AG04449 (cell line): ENCODE measurements at regions of chr15 and their contacts with region 1.

Region 1: DNA sequence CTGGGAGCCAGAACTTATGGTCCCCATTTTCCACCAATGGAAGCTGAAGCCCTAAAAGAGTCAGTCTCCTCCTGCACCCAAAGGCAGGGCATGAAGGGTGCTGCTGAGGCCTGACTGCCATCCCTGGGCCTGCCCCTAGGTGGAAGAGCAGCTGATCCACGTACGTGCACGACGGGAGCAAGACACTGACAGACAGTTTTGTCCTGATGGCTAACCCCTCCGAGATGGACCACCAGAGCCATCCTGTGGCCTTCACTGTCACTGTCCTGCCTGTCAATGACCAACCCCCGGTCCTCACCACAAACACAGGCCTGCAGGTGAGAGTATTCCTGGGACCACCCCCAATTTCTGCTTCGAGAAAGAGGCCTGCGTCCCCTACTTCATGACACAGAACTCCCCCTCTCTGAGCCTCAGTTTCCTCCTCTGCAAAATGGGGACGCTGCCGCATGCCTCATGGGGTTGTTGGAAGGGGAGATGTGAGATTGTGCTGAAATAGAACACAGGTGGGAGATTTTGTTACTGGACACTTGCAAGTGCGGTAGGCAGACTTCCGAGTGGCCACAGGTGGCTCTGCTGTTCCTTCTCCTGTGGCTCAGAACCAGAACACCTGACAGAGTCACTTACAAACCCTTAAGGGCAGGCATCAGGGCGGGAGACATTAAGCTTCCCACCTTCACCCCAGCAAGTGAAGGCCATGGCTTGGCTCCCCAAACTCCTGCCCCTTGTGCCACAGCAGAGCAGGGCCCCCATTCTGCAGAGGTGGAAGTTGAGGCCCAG is 175.3 kb downstream of the TBC1D2B start:
- DNase-seq: no peak
- H3K4me3 ChIP-seq: no peak overlapping the region
- CTCF ChIP-seq: peak; percentile 21

Region 2: DNA sequence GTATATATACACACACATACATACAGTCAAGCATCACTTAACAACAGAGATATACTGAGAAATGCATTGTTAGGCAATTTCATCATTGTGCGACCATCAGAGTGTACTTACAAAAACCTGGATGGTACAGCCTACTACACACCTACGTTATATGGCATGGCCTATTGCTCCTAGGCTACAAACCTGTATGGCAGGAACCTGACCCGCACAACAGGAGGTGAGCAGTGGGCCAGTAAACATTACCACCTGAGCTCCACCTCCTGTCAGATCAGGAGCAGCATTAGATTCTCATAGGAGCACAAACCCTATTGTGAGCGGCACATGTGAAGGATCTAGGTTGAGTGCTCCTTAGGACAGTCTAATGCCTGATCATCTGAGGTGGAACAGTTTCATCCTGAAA is 1086.8 kb before region 1 on chr15:
- CTCF ChIA-PET with region 1: no interaction called
- POLR2A ChIA-PET with region 1: no interaction called
- DNase-seq: no peak
- H3K4me3 ChIP-seq: no peak overlapping the region
- CTCF ChIP-seq: no peak

Region 3: DNA sequence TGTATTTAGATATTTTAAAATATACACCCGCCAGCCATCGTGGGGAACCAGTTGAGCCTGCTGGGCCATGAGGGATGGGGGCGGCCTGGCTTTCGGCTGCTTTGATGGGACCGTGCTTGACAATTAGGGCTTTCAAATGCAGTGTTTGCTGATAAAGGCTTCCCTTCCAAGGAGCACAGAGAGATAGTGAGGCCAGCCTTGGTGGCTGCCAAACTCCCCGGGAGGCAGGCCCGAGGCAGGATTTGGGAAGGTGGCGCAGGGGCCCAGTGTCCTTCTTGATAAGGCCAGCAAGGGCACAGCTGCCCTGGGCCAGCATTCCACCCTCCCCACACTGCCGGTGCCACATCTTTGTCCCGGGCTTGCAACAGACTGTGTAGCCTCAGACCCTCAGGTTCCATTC is 345.0 kb before region 1 on chr15:
- CTCF ChIA-PET with region 1: no interaction called
- POLR2A ChIA-PET with region 1: no interaction called
- DNase-seq: no peak
- H3K4me3 ChIP-seq: no peak overlapping the region
- CTCF ChIP-seq: no peak

Region 4: DNA sequence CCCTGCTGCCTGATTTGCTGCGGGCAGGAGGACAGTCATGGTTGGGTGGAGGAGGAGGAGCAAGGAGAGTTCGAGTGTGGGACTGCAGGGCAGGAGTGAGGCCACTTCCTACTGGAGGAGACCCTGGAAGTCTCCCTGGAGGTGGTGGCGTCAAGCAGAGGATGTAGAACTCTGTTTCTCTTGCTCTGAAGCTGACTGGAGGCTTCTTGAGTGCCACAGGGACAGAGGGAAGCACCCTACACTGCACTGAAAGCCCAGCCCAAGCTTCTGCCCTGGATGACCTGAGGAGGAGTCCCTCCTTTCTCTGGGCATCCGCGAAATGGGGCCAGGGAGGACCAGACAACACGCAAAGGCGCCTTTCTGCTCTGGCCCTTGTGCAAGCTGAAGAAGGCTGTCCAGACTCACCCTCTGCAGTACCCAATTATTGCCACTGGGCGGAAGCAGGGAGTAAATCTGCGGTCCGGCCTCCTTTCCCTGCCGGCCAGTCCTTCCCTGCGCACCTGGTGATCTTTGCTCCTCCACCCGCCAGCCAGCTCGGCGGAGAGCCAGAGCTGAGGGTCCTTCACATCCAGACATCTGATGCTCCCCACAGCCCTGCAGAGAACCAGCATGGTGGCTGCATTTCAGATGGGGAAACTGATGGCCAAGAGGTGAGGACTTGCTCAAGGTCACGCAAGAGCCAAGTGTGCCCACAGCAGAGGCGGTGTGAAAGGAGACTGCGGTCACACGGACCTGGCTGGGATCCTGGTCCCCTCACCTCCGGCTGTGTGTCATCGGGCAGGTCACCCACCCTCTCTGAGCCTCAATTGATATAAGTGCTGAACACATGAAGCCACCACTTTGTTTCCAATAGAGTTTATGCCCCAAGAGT is 31.7 kb before region 1 on chr15:
- CTCF ChIA-PET with region 1: interaction called, 10 read pairs
- POLR2A ChIA-PET with region 1: no interaction called
- DNase-seq: no peak
- H3K4me3 ChIP-seq: no peak overlapping the region
- CTCF ChIP-seq: peak; percentile 81

Region 5: DNA sequence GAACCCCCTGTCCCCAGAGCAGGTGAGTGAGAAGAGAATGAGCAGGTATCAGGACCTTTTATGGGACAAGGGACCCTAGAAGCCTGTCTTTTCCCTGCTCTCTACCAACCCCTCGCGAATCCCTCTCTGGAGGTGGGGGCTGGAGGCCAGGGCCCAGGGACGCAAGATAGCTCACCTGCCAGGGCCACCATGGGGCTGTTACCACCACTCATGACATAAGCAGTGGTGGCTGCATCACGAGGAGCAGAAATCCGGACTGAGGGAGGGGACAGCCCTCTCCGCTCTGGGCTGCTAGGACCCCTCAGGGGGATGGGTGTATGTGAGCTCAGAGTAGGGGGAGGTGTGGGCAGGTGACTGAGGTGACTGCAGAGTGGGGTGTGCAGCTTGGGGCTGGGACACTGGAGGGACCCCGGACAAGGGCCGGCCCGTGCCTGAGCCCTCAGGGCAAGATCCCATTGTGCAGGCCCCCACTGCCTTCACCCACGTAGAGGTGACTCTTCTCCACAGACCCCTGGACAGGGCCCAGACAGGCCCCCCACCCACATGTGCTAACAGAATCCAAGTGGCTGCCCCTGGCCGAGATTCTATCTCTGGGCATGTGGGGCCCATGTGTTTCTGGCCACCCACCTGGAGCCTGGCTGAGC is 15.2 kb before region 1 on chr15:
- CTCF ChIA-PET with region 1: interaction called, 11 read pairs
- POLR2A ChIA-PET with region 1: no interaction called
- DNase-seq: no peak
- H3K4me3 ChIP-seq: no peak overlapping the region
- CTCF ChIP-seq: no peak

Region 6: DNA sequence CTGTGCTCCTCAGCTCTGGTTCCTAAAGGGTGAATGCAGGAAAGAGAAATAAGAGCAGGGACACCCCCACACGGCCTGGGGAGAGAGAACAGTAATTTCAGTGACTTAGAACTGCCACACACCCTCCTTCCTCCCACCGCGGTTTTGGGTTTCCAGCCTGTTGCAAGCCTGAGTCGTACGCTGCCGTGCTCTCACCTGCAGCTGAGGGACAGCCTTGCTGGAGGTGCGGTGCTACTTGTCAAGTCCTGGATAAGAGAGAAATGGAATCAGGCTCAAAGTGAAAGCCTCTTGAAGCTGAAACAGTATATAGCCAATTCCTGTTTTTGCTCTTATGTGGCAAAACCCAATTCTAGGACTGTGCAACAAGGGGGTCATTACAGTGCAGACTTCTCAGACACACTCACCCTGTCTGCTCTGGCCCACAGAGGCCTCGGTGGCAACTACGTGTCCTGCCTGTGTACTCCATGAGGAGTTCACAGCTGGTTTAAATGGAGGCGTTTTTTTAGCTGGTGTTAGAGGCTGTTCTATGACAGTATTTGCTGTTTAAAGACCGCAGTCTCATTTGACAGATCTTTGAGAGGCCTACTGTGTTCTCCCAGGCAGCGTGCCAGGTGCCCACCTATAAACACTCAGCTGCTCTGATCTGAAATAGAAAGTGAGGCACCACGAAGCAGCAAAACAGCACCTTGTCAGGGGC is 132.5 kb after region 1 on chr15:
- CTCF ChIA-PET with region 1: no interaction called
- POLR2A ChIA-PET with region 1: no interaction called
- DNase-seq: no peak
- H3K4me3 ChIP-seq: no peak overlapping the region
- CTCF ChIP-seq: no peak

Region 7: DNA sequence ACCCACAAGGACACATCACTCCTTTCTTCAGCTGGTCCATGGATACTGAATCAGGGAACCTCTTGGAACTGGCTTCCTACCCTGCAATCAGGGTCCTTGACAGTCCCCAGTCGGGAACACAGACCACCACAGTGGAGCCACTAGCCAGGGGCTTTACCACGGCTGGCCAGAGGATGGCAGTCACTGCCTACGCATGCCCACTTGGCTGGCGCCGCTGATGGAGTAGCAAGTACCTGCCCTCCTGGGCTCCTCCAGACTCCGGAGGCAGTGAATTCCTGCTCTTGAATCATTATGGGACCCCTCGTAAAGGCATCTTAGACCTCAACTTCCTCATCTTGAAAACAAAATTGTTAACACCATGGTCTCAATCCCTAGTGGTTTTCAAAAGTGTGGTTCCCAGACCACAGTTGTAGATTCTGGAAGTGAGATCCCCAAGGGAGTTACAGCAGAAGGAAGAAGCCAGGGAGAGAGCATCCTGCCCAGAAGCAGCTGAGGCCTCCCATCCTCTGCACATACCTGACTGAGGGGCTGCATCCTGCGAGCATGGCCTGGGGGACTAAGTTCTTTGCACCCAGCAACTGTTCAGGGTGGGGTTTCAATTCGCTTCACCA is 406.4 kb after region 1 on chr15:
- CTCF ChIA-PET with region 1: no interaction called
- POLR2A ChIA-PET with region 1: no interaction called
- DNase-seq: no peak
- H3K4me3 ChIP-seq: no peak overlapping the region
- CTCF ChIP-seq: peak; percentile 95